PC-3 (cell line): ENCODE measurements at regions of chr20 and their contacts with region 1.

Region 1: GRCh38 chr20:20860078-20860806 is 147.8 kb upstream of the RALGAPA2 start:
- DNase-seq: peak; percentile 98
- ATAC-seq: peak; percentile 94
- H3K4me3 ChIP-seq: no peak overlapping the region
- H3K27ac ChIP-seq: no peak overlapping the region
- H3K4me1 ChIP-seq: no peaks in the 10 kb centered on the region
- H3K27me3 ChIP-seq: peaks cover 12% of the 10 kb centered on the region; the same call in 1 of the 2 replicates
- CTCF ChIP-seq: peak; percentile 98

Region 2: GRCh38 chr20:20887593-20888265 is 27.5 kb after region 1 on chr20:
- CTCF ChIA-PET with region 1: no interaction called
- POLR2A ChIA-PET with region 1: no interaction called
- intact Hi-C with region 1: no loop called
- DNase-seq: no peak
- ATAC-seq: no peak
- H3K4me3 ChIP-seq: no peak overlapping the region
- H3K27ac ChIP-seq: no peak overlapping the region
- H3K4me1 ChIP-seq: no peaks in the 10 kb centered on the region
- H3K27me3 ChIP-seq: peaks cover 73% of the 10 kb centered on the region; the same call in 1 of the 2 replicates
- CTCF ChIP-seq: no peak

Region 3: GRCh38 chr20:21125849-21126580 is 265.8 kb after region 1 on chr20 and contains the start of gene KIZ:
- CTCF ChIA-PET with region 1: interaction called, 3 read pairs
- POLR2A ChIA-PET with region 1: no interaction called
- intact Hi-C with region 1: loop called (anchors 2 kb)
- DNase-seq: peak; percentile 98
- ATAC-seq: peak; percentile 93
- H3K4me3 ChIP-seq: peak within 1 kb of the TSS; percentile 87
- H3K27ac ChIP-seq: no peak within 1 kb of the TSS
- H3K4me1 ChIP-seq: peaks cover 10% of the 10 kb centered on the region
- H3K27me3 ChIP-seq: no peaks in the 10 kb centered on the region
- CTCF ChIP-seq: no peak
- total RNA-seq, gene KIZ: 10.3 and 13.4 TPM in 2 replicates

Region 4: DNA sequence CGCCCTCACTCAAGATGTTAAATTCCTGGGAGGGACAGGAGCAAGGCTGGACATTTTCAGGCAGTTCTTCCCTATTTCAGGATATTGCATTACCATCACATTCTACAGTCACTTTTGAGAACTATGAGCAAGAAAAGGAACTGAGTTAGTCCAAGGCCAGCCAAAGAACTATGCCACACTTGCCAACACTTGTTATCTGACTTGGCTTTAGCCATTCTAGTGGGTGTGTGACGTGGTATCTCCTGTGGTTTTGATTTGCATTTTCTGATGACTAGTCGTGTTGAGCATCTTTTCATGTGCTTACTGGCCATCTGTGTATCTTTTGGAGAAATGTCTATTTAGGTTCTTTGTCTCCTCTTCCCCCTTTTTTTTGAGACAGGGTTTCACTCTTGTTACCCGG is 454.9 kb after region 1 on chr20:
- CTCF ChIA-PET with region 1: no interaction called
- POLR2A ChIA-PET with region 1: no interaction called
- intact Hi-C with region 1: loop called (anchors 10 kb)
- DNase-seq: no peak
- ATAC-seq: no peak
- H3K4me3 ChIP-seq: no peak overlapping the region
- H3K27ac ChIP-seq: no peak overlapping the region
- H3K4me1 ChIP-seq: no peaks in the 10 kb centered on the region
- H3K27me3 ChIP-seq: no peaks in the 10 kb centered on the region
- CTCF ChIP-seq: no peak

Region 5: GRCh38 chr20:21505161-21505809 is 645.0 kb after region 1 on chr20:
- CTCF ChIA-PET with region 1: interaction called, 7 read pairs
- POLR2A ChIA-PET with region 1: no interaction called
- intact Hi-C with region 1: loop called (anchors 1 kb)
- DNase-seq: peak; percentile 74
- ATAC-seq: peak; percentile 63
- H3K4me3 ChIP-seq: peak overlapping the region; percentile 55
- H3K27ac ChIP-seq: no peak overlapping the region
- H3K4me1 ChIP-seq: peaks cover 8% of the 10 kb centered on the region
- H3K27me3 ChIP-seq: peaks cover 38% of the 10 kb centered on the region
- CTCF ChIP-seq: peak; percentile 98

Region 6: GRCh38 chr20:21615617-21616080 is 755.4 kb after region 1 on chr20:
- CTCF ChIA-PET with region 1: no interaction called
- POLR2A ChIA-PET with region 1: no interaction called
- intact Hi-C with region 1: loop called (anchors 2 kb)
- DNase-seq: peak; percentile 73
- ATAC-seq: peak; percentile 91
- H3K4me3 ChIP-seq: no peak overlapping the region
- H3K27ac ChIP-seq: no peak overlapping the region
- H3K4me1 ChIP-seq: no peaks in the 10 kb centered on the region
- H3K27me3 ChIP-seq: peaks cover 30% of the 10 kb centered on the region; the same call in 1 of the 2 replicates
- CTCF ChIP-seq: peak; percentile 95